ENCODE measurements at regions of chr5 and their contacts with region 1.

Region 1: DNA sequence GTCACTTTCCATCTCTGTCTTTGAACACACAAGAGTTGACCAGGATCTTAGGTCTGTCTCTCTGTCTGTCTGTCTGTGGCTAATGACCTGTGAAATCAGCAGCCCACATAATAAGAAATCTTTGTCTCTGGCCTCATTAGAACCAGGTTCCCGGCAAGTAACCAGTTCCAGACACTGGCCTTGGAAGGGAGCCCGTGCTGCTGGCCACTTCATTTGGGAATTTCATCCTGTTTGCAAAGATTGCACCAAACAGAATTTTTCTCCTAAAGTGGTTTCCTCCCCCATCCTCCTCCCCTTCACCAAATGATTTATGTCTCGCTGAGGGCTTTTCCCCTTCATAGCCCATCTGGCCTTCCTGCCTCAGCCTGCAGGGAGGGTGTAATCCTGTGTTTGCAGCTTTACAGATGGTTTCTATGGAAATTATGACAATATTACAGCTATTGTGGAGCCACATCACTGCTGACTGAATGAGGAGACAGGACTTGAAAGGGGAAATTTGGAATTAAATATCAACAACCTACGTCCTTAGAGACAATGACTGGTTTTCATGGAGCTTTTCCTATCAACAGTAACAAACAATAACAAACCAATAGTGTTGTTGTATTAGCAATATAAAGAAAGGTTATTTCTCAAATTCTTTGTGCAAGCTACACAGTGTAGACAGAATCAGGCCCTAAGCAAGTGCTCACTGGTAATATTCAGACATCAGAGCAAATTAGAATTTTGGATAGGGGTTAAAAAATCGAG is 25.7 kb downstream of the DPYSL3 start:
- DNase-seq: peak; percentile 92
- H3K4me3 ChIP-seq: no peak overlapping the region
- CTCF ChIP-seq: no peak

Region 2: DNA sequence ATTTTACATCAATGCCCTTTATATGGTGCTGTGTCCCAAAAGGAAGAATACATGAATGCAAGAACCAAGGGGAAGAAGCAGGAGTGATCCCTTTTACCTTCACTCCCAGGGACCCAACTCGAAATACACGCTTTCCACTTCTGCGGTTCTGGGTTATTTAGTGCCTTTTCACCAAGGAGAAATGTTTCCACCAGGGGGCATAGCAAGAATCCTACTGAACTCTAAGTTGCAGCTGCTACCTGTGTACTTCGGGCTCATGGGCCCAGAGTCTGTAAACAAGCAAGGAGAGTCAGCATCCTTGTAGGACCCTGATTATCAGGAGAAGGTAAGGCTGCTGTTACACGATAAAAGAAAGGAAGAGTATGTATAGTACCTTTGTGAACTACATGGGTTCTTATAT is 19.9 kb before region 1 on chr5:
- CTCF ChIA-PET with region 1: interaction called, 27 read pairs
- POLR2A ChIA-PET with region 1: interaction called, 4 read pairs
- DNase-seq: no peak
- H3K4me3 ChIP-seq: no peak overlapping the region
- CTCF ChIP-seq: peak; percentile 37